H1 (cell line): ENCODE measurements at regions of chr13 and their contacts with region 1.

Region 1: GRCh38 chr13:51167393-51168191 is 54.6 kb upstream of the FAM124A start:
- DNase-seq: peak in 1 of 2 experiments; percentile 23
- H3K4me3 ChIP-seq: no peak overlapping the region
- H3K27ac ChIP-seq: peak overlapping the region; percentile 83; the same call in 1 of the 2 replicates
- H3K4me1 ChIP-seq: peaks cover 6 to 14% (median 12%) of the 10 kb centered on the region in 4 experiments; a peak in 6 of 7 replicates
- H3K27me3 ChIP-seq: no peaks in the 10 kb centered on the region
- CTCF ChIP-seq: no peak
- EP300 ChIP-seq: no peak
- POLR2A ChIP-seq: no peak
- RAD21 ChIP-seq: no peak

Region 2: GRCh38 chr13:51148952-51149573 is 18.5 kb before region 1 on chr13:
- CTCF ChIA-PET with region 1: interaction called, 11 read pairs
- POLR2A ChIA-PET with region 1: interaction called, 494 read pairs
- DNase-seq: peak in 1 of 2 experiments; percentile 66
- H3K4me3 ChIP-seq: peak overlapping the region in 2 of 4 experiments; percentile 4 to 23; a peak in 3 of 8 replicates
- H3K27ac ChIP-seq: peak overlapping the region; percentile 56
- H3K4me1 ChIP-seq: peaks cover 11 to 32% (median 26%) of the 10 kb centered on the region in 4 experiments
- H3K27me3 ChIP-seq: no peaks in the 10 kb centered on the region
- CTCF ChIP-seq: peak; percentile 32 to 80 (median 58); a peak in 3 of 4 replicates
- EP300 ChIP-seq: no peak
- POLR2A ChIP-seq: no peak
- RAD21 ChIP-seq: peak; percentile 87 to 90

Region 3: GRCh38 chr13:51154029-51154555 is 13.5 kb before region 1 on chr13:
- CTCF ChIA-PET with region 1: interaction called, 11 read pairs
- POLR2A ChIA-PET with region 1: interaction called, 494 read pairs
- DNase-seq: peak in 1 of 2 experiments; percentile 31
- H3K4me3 ChIP-seq: no peak overlapping the region
- H3K27ac ChIP-seq: no peak overlapping the region
- H3K4me1 ChIP-seq: peaks cover 8 to 23% (median 18%) of the 10 kb centered on the region in 4 experiments; a peak in 6 of 7 replicates
- H3K27me3 ChIP-seq: no peaks in the 10 kb centered on the region
- CTCF ChIP-seq: no peak
- EP300 ChIP-seq: no peak
- POLR2A ChIP-seq: no peak
- RAD21 ChIP-seq: no peak

Region 4: GRCh38 chr13:51222037-51222685 is 54.6 kb after region 1 on chr13 and contains the start of gene FAM124A:
- CTCF ChIA-PET with region 1: no interaction called
- POLR2A ChIA-PET with region 1: interaction called, 160 read pairs
- DNase-seq: peak in 1 of 2 experiments; percentile 80
- H3K4me3 ChIP-seq: peak within 1 kb of the TSS; percentile 80 to 96 (median 89)
- H3K27ac ChIP-seq: peak within 1 kb of the TSS; percentile 24; the same call in 1 of the 2 replicates
- H3K4me1 ChIP-seq: peaks cover 6 to 23% (median 22%) of the 10 kb centered on the region in 4 experiments
- H3K27me3 ChIP-seq: no peaks in the 10 kb centered on the region
- CTCF ChIP-seq: peak; percentile 10 to 71 (median 46); a peak in 3 of 4 replicates
- EP300 ChIP-seq: no peak
- POLR2A ChIP-seq: peak in 1 of 2 experiments; percentile 42; a peak in 2 of 3 replicates
- RAD21 ChIP-seq: peak in 1 of 2 experiments; percentile 43; a peak in 2 of 4 replicates
- total RNA-seq, gene FAM124A: 47.1 and 49.9 TPM in 2 replicates

Region 5: GRCh38 chr13:51267622-51268021 is 100.0 kb after region 1 on chr13:
- CTCF ChIA-PET with region 1: no interaction called
- POLR2A ChIA-PET with region 1: no interaction called
- DNase-seq: no peak
- H3K4me3 ChIP-seq: no peak overlapping the region
- H3K27ac ChIP-seq: no peak overlapping the region
- H3K4me1 ChIP-seq: peaks cover 0 to 16% (median 4%) of the 10 kb centered on the region in 4 experiments; a peak in 6 of 7 replicates
- H3K27me3 ChIP-seq: no peaks in the 10 kb centered on the region
- CTCF ChIP-seq: no peak
- EP300 ChIP-seq: no peak
- POLR2A ChIP-seq: no peak
- RAD21 ChIP-seq: no peak